WTC11 (cell line): ENCODE measurements at regions of chr7 and their contacts with region 1.

Region 1: GRCh38 chr7:100435401-100436304 is 644 bp downstream of the PPP1R35 start:
- DNase-seq: peak; percentile 47
- ATAC-seq: peak; percentile 17
- H3K4me3 Mint-ChIP-seq: peak overlapping the region; percentile 89
- H3K27ac Mint-ChIP-seq: peak overlapping the region; percentile 58
- H3K4me1 Mint-ChIP-seq: peaks cover 36% of the 10 kb centered on the region
- H3K27me3 Mint-ChIP-seq: no peaks in the 10 kb centered on the region
- CTCF ChIP-seq: no peak

Region 2: DNA sequence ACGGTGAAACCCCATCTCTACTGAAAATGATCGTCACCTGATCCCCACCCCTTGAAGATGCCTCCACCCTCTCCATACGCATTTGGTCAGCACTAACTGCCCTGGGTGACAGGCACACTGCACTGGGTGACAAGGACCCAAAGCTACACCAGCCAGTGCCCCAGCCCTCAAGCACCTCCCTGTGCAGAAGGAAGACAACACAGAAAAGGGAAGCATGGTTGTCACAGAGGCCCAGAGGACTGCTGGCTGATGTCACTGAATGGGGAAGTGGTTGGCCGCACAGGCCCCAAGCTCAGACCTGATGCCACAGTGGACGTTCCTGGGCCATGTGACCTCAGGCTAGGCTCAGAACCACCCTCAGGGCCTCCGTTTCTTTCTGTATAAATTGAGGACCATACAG is 66.5 kb before region 1 on chr7:
- CTCF ChIA-PET with region 1: no interaction called
- POLR2A ChIA-PET with region 1: no interaction called
- DNase-seq: no peak
- ATAC-seq: no peak
- H3K4me3 Mint-ChIP-seq: no peak overlapping the region
- H3K27ac Mint-ChIP-seq: 0 out of 2 replicates have a peak overlapping the region, but pooled peaks have one; percentile 79
- H3K4me1 Mint-ChIP-seq: peaks cover 34% of the 10 kb centered on the region
- H3K27me3 Mint-ChIP-seq: no peaks in the 10 kb centered on the region
- CTCF ChIP-seq: no peak

Region 3: GRCh38 chr7:100415448-100415847 is 20.2 kb before region 1 on chr7:
- CTCF ChIA-PET with region 1: no interaction called
- POLR2A ChIA-PET with region 1: interaction called, 10 read pairs
- DNase-seq: no peak
- ATAC-seq: no peak
- H3K4me3 Mint-ChIP-seq: no peak overlapping the region
- H3K27ac Mint-ChIP-seq: no peak overlapping the region
- H3K4me1 Mint-ChIP-seq: no peaks in the 10 kb centered on the region
- H3K27me3 Mint-ChIP-seq: peaks cover 11% of the 10 kb centered on the region
- CTCF ChIP-seq: no peak